ENCODE measurements at regions of chr7 and their contacts with region 1.

Region 1: GRCh38 chr7:39894904-39895303 is 55.2 kb upstream of the CDK13 start:
- DNase-seq: no peak
- H3K4me3 Mint-ChIP-seq: no peak overlapping the region
- H3K27ac Mint-ChIP-seq: no peak overlapping the region
- H3K4me1 Mint-ChIP-seq: no peaks in the 10 kb centered on the region
- H3K27me3 Mint-ChIP-seq: no peaks in the 10 kb centered on the region

Region 2: DNA sequence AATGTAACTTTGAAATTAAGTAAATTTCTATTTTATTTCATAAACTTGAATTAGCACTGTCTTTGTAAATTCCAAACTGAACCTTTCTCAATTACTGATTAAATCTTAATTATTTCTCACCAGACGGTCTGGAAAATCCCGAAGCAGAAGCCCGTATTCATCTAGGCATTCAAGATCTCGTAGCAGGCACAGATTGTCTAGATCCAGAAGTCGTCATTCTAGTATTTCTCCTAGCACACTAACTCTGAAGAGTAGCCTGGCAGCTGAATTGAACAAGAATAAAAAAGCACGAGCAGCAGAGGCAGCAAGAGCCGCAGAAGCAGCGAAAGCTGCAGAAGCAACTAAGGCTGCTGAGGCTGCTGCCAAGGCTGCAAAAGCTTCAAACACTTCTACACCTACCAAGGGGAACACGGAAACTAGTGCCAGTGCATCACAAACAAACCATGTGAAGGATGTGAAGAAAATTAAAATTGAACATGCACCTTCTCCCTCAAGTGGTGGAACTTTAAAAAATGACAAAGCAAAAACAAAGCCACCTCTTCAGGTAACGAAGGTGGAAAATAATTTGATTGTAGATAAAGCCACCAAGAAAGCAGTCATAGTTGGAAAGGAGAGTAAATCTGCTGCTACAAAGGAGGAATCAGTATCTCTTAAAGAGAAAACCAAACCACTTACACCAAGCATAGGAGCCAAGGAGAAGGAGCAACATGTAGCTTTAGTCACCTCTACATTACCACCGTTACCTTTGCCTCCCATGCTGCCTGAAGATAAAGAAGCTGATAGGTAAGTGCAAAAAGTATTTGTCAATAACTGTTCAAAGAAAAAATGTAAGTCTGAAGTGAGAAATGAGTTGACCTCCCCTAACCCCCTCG is 92.8 kb after region 1 on chr7:
- CTCF ChIA-PET with region 1: interaction called, 3 read pairs
- intact Hi-C with region 1: loop called (anchors 2 kb)
- DNase-seq: peak; percentile 28
- H3K4me3 Mint-ChIP-seq: peak overlapping the region; percentile 14
- H3K27ac Mint-ChIP-seq: peak overlapping the region; percentile 77
- H3K4me1 Mint-ChIP-seq: peaks cover 50% of the 10 kb centered on the region
- H3K27me3 Mint-ChIP-seq: no peaks in the 10 kb centered on the region

Region 3: DNA sequence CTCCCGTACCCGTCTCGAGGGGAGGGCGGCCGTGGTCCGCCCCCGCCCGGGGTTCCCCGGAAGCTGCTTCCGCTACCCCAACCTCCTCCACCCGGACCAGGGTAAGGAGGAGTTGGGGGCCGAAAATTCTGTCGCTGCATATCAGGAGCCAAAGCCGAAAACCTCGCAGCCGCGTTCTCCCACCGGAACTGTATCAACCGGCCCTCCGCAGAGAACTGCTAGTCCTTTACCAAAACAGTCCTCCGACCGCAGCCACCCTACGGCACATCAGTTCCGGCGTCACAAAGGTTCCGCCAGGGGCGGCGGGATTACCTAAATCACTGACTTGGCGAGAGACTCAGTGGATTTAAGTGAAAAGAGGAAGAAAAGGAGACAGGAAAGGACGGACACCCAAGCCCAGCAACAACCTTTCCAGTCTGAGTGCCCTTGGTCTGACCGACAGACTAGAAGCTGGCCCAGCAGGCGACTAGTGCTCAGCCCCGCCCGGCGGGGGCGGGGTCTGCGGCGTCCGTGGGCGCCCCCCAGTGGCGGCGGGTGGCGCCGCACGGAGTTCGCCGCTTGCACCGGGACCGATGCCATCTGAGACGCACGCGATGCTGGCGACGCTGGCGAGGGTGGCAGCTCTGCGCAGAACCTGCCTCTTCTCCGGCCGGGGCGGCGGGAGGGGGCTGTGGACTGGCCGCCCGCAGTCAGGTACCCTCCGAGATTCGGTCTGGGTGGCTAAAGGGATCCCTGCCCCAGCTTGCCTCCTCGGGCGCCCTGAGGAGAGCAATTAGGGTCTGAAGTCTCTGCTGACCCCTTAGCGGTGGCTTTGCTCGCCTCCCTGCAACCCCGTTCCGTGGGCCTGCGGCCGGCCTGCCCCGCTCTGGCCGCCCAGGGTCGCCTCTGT is 239.8 kb after region 1 on chr7 and contains the starts of genes MPLKIP and SUGCT:
- CTCF ChIA-PET with region 1: interaction called, 9 read pairs
- intact Hi-C with region 1: loop called (anchors 1 kb)
- DNase-seq: peak; percentile 87
- H3K4me3 Mint-ChIP-seq: peak within 1 kb of the TSS; percentile 93
- H3K27ac Mint-ChIP-seq: peak within 1 kb of the TSS; percentile 96
- H3K4me1 Mint-ChIP-seq: peaks cover 26% of the 10 kb centered on the region
- H3K27me3 Mint-ChIP-seq: no peaks in the 10 kb centered on the region
- total RNA-seq, gene MPLKIP: 38.1 to 38.8 TPM
- total RNA-seq, gene SUGCT: 0.81 to 1.2 TPM